ENCODE measurements at regions of chrX and their contacts with region 1.

Region 1: DNA sequence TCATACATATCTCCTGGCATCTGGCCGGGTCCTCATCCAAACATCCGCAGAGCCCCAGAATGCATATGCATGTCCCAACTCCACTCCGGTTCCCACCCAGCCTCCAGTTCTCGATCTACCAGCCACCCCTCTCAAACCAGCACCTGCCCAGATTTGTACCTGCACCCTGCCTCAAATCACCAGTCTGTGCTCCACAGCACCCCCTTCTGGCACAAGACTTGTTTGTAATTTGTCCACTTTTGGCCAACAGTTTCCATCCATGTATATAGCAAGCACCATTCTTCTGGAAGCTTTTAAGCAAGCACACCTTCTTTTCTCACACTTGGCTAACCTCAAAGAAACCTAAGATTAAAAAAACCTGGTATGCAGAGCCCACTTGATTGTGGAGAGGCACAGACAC is 644.1 kb downstream of the MID1IP1 start:
- DNase-seq: peak in 1 of 3 donors; percentile 44
- ATAC-seq: no peak
- H3K4me3 ChIP-seq: no peak overlapping the region
- H3K27ac ChIP-seq: no peak overlapping the region
- H3K4me1 ChIP-seq: no peaks in the 10 kb centered on the region
- H3K27me3 ChIP-seq: no peaks in the 10 kb centered on the region

Region 2: GRCh38 chrX:39504850-39505259 is 59.5 kb after region 1 on chrX:
- intact Hi-C with region 1: loop called in 1 of 4 experiments (anchors 10 kb)
- DNase-seq: peak in 1 of 3 donors; percentile 56
- ATAC-seq: peak; percentile 43 to 88
- H3K4me3 ChIP-seq: no peak overlapping the region
- H3K27ac ChIP-seq: no peak overlapping the region
- H3K4me1 ChIP-seq: peaks cover 1% of the 10 kb centered on the region
- H3K27me3 ChIP-seq: no peaks in the 10 kb centered on the region